ENCODE measurements at regions of chr7 and their contacts with region 1.

Region 1: GRCh38 chr7:129952653-129953560 is at the start of gene UBE2H:
- DNase-seq: peak; percentile 91
- H3K4me3 Mint-ChIP-seq: peak within 1 kb of the TSS; percentile 99
- H3K27ac Mint-ChIP-seq: peak within 1 kb of the TSS; percentile 96
- H3K4me1 Mint-ChIP-seq: peaks cover 4% of the 10 kb centered on the region
- H3K27me3 Mint-ChIP-seq: no peaks in the 10 kb centered on the region
- total RNA-seq, gene UBE2H: 33.4 to 37.6 TPM

Region 2: DNA sequence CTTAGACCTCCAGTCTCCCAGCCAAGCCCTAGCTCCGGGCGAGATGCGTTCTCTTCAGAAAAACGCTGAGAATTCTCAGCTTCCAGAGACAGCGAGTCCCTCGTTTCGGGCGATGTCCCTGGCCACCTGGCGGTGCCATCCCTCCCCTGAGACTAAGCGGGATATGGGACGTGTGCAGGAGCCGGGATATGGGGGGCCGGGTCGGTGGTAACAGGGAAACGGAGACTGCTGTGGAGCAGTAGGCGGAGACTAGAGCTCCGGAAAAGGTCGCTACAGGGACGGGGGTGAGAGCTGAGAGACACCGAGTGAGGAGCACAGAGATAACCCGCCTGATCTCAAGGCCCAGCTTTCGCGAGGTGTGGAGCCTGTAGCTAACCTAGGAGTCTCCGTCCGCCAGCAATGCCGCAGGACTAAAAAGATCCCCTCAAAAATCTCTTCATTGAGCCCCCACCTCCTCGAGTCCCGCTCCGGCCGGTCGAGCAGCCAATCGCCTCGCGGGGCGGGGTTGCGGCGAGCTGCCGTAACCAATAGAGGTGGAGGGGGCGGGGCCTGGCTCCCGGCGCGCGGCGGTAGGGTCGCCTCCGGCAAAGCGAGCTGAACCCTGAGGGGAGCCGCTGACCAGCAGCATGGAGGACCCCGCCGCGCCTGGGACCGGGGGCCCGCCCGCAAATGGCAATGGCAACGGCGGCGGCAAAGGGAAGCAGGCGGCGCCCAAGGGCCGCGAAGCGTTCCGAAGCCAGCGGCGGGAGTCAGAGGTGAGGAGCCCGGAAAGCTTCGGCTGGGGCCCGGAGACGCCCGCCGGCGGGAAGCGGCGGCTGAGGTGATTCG is 518.8 kb before region 1 on chr7 and contains the start of gene STRIP2:
- CTCF ChIA-PET with region 1: no interaction called
- intact Hi-C with region 1: loop called (anchors 1 kb)
- DNase-seq: peak; percentile 94
- H3K4me3 Mint-ChIP-seq: peak within 1 kb of the TSS; percentile 89
- H3K27ac Mint-ChIP-seq: peak within 1 kb of the TSS; percentile 92
- H3K4me1 Mint-ChIP-seq: peaks cover 28% of the 10 kb centered on the region
- H3K27me3 Mint-ChIP-seq: peaks cover 7% of the 10 kb centered on the region
- total RNA-seq, gene STRIP2: 71.4 to 76.0 TPM

Region 3: GRCh38 chr7:129825496-129826267 is 127.2 kb before region 1 on chr7:
- CTCF ChIA-PET with region 1: interaction called, 6 read pairs
- intact Hi-C with region 1: loop called (anchors 2 kb)
- DNase-seq: peak; percentile 89
- H3K4me3 Mint-ChIP-seq: peak overlapping the region; percentile 90
- H3K27ac Mint-ChIP-seq: no peak overlapping the region
- H3K4me1 Mint-ChIP-seq: peaks cover 21% of the 10 kb centered on the region
- H3K27me3 Mint-ChIP-seq: no peaks in the 10 kb centered on the region

Region 4: GRCh38 chr7:129923709-129924108 is 29.2 kb before region 1 on chr7:
- CTCF ChIA-PET with region 1: no interaction called
- intact Hi-C with region 1: loop called (anchors 2 kb)
- DNase-seq: no peak
- H3K4me3 Mint-ChIP-seq: no peak overlapping the region
- H3K27ac Mint-ChIP-seq: no peak overlapping the region
- H3K4me1 Mint-ChIP-seq: peaks cover 37% of the 10 kb centered on the region
- H3K27me3 Mint-ChIP-seq: no peaks in the 10 kb centered on the region

Region 5: DNA sequence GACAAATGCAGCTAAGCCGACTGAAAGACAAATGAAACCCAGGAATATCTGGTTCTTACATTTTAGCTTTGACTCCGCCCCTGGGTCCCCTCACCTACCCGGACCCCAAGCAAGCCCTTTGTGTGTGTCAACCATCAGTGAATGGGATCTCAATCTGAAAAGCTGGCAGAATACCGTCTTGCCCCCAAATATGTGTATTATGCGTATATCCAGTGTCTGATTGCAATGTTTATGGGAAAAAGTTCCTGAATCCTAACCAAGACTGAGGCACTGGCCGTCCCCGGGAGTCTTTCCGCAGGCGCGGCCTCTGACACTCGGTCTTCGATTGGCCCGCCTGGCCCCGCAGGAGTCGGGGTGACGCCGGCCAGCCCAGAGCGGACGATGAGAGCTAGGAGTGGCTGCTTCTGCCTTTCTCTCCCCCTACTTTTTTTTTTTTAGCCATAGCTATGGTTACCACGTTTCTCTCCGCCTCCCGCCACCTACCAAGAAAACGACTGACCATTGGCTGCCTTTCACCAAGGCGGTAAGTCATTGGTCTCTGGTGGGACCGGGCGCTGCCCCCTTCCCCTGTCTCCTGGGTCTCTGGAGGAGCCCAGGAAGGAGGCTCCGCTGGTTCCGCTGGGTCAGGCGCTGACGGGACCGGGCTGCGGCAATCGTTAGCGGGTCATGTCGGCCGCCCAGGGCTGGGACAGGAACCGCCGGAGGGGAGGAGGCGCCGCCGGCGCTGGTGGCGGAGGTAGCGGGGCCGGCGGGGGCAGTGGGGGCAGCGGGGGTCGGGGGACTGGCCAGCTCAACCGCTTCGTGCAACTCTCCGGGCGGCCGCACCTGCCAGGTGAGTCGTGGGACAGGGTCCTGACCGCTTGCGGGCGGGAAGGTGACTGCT is 117.3 kb after region 1 on chr7 and contains the start of gene KLHDC10:
- CTCF ChIA-PET with region 1: no interaction called
- intact Hi-C with region 1: loop called (anchors 1 kb)
- DNase-seq: peak; percentile 98
- H3K4me3 Mint-ChIP-seq: peak within 1 kb of the TSS; percentile 79
- H3K27ac Mint-ChIP-seq: peak within 1 kb of the TSS; percentile 70
- H3K4me1 Mint-ChIP-seq: peaks cover 38% of the 10 kb centered on the region
- H3K27me3 Mint-ChIP-seq: no peaks in the 10 kb centered on the region
- total RNA-seq, gene KLHDC10: 11.6 to 12.9 TPM

Region 6: GRCh38 chr7:131007394-131008330 is 1054.8 kb after region 1 on chr7:
- CTCF ChIA-PET with region 1: no interaction called
- intact Hi-C with region 1: loop called (anchors 5 kb)
- DNase-seq: peak; percentile 80
- H3K4me3 Mint-ChIP-seq: peak overlapping the region; percentile 52
- H3K27ac Mint-ChIP-seq: peak overlapping the region; percentile 91
- H3K4me1 Mint-ChIP-seq: peaks cover 86% of the 10 kb centered on the region
- H3K27me3 Mint-ChIP-seq: no peaks in the 10 kb centered on the region